Dorsolateral prefrontal cortex (tissue), 120 donors: ENCODE measurements at regions of chr6 and their contacts with region 1.

Region 1: GRCh38 chr6:155314092-155314772 is at the start of gene TFB1M:
- DNase-seq: peak; percentile 95 to 99 (median 98)
- H3K4me3 ChIP-seq: peak within 1 kb of the TSS; percentile 60 to 99 (median 85)
- H3K27ac ChIP-seq: peak within 1 kb of the TSS; percentile 38 to 97 (median 89)
- H3K27me3 ChIP-seq: no peaks in the 10 kb centered on the region
- CTCF ChIP-seq: peak in 27 of 56 donors; percentile 3 to 53 (median 20)
- total RNA-seq, gene TFB1M: 16.1 to 42.1 (median 25.9) TPM

Region 2: GRCh38 chr6:155253337-155253736 is 60.9 kb before region 1 on chr6:
- intact Hi-C with region 1: loop called in 1 of 2 experiments (anchors 10 kb)
- DNase-seq: no peak
- H3K4me3 ChIP-seq: no peak overlapping the region
- H3K27ac ChIP-seq: peak overlapping the region in 31 of 59 donors; percentile 1 to 59 (median 30)
- H3K27me3 ChIP-seq: no peaks in the 10 kb centered on the region
- CTCF ChIP-seq: no peak

Region 3: GRCh38 chr6:155275808-155276480 is 38.3 kb before region 1 on chr6:
- intact Hi-C with region 1: loop called (anchors 5 kb)
- DNase-seq: peak in 5 of 10 donors; percentile 7 to 57 (median 52)
- H3K4me3 ChIP-seq: peak overlapping the region in 12 of 59 donors; percentile 1 to 44 (median 9)
- H3K27ac ChIP-seq: peak overlapping the region; percentile 67 to 98 (median 91)
- H3K27me3 ChIP-seq: no peaks in the 10 kb centered on the region
- CTCF ChIP-seq: no peak